CD8-positive, alpha-beta T cell (primary cell): ENCODE measurements at regions of chr1 and their contacts with region 1.

Region 1: DNA sequence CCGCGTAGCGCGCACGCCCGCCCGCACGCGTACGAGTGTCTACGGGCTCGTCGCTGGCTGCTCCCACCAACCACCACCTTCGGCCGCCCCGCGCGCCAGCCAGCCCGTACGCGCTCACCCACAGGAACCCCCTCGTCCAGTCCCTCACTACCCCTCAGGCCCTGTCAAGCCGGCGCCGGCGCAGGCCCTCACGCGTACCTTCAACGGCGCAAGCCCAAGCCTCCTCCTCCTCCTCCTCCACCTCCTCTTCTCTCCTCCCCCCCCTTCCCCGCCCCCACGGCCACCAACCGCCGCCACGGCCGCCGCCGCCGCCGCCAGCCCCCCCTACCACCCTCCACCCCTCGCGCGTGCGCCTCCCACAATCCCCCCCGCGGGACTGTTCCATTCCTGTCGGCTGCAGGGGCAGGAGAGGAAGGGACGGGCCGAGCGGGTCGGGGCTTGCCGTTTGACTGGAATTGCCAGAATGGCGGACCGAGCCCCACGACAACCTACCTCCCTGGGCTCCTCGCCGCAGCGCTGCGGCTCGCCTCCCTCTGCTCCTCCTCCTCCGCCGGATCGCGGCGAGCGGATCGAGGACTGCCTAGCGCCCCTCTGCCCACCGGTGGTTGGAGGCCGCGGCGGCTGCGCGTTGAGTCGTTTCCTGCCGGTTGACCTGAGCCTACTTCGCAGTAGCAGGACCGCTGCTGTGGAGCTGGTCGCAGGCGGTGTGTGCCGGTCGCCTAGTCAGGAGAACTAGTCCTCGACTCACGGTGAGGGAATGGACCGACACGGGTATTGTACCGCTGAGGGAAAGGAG is at the start of gene ASH1L:
- DNase-seq: peak; percentile 89 to 98 (median 94)
- ATAC-seq: peak; percentile 73
- H3K4me3 ChIP-seq: peak within 1 kb of the TSS; percentile 91 to 100
- H3K4me3 Mint-ChIP-seq: peak within 1 kb of the TSS; percentile 99
- H3K27ac ChIP-seq: peak within 1 kb of the TSS; percentile 97 to 98
- H3K27ac Mint-ChIP-seq: peak within 1 kb of the TSS; percentile 98
- H3K4me1 ChIP-seq: peaks cover 38% of the 10 kb centered on the region
- H3K4me1 Mint-ChIP-seq: peaks cover 53% of the 10 kb centered on the region
- H3K27me3 ChIP-seq: no peaks in the 10 kb centered on the region
- H3K27me3 Mint-ChIP-seq: no peaks in the 10 kb centered on the region
- CTCF ChIP-seq: no peak
- total RNA-seq, gene ASH1L: 54.6 to 58.9 TPM

Region 2: DNA sequence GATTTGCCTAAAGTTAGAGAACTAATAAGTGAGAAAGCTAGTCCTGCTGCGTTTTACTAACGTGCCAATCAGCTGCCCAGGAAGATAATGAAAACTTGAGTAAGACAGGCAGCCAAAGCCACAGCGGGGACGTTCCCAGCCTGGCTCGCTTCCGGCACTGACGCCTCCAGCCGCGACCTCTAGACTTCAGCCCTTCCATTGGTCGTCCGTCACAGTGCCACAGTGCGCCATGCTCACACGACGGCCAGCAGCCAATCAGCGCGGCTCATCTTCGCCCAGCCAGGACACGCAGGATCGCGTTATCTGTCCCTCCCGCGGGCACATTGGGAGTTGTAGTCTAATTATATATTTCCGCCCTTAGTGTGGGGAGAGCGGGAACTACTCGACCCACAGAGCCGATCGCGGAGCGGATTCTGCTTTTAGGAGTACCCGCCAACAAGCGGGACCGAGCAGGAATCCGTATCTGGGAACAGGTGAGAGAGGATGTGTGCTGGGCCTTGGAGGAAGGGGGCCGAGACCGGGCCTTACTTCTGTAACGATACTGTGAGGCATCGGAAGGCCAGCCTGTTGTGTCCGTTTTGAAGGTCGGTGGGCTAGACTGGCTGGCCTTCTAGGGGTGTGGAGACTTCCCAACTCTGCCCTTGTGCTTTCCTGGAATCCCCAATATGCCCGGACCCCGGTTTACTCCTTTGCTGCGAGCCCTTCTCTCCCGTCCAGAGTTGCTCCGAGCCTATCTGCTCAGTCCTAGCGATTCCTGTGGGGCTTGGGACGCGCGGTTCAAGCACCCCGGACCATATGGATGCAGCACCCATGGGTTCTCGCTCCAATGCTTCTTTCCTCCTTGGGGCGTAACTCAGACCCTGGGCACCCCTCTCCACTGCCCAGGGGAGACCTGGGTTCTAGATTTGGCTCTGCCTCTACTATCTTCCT is 254.0 kb before region 1 on chr1 and contains the start of gene FDPS:
- CTCF ChIA-PET with region 1: no interaction called
- POLR2A ChIA-PET with region 1: no interaction called
- intact Hi-C with region 1: loop called in 1 of 2 experiments (anchors 2 kb)
- DNase-seq: peak; percentile 92 to 100 (median 96)
- ATAC-seq: peak; percentile 97
- H3K4me3 ChIP-seq: peak within 1 kb of the TSS; percentile 73 to 97
- H3K4me3 Mint-ChIP-seq: peak within 1 kb of the TSS; percentile 94
- H3K27ac ChIP-seq: peak within 1 kb of the TSS; percentile 70 to 91
- H3K27ac Mint-ChIP-seq: peak within 1 kb of the TSS; percentile 93
- H3K4me1 ChIP-seq: peaks cover 18% of the 10 kb centered on the region
- H3K4me1 Mint-ChIP-seq: peaks cover 27% of the 10 kb centered on the region
- H3K27me3 ChIP-seq: no peaks in the 10 kb centered on the region
- H3K27me3 Mint-ChIP-seq: no peaks in the 10 kb centered on the region
- CTCF ChIP-seq: no peak
- total RNA-seq, gene FDPS: 38.2 to 38.7 TPM

Region 3: DNA sequence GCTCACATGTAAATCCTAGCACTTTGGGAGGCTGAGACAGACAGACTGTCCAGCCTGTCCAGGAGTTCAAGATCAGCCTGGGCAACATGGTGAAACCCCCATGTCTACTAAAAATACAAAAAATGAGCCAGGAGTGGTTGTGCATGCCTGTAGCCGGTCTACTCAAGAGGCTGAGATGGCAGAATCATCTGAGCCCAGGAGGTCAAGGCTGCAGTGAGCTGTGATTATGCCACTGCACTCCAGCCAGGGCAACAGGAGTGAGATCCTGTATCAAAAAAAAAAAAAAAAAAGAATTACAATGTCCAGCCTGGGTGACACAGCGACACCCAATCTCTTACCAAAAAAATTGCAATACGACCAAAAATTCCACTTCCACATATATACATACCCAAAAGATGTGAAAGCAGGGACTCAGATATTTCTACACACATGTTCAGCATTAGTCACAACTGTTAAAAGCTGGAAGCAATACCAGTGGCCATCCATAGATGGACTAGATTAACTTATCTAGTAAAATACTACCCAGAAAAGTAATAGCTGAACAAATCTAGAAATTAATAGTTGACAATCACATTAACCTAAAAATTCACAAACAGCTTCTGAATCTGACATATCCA is 49.4 kb before region 1 on chr1:
- CTCF ChIA-PET with region 1: no interaction called
- POLR2A ChIA-PET with region 1: interaction called, 4 read pairs
- intact Hi-C with region 1: loop called in 1 of 2 experiments (anchors 10 kb)
- DNase-seq: no peak
- ATAC-seq: no peak
- H3K4me3 ChIP-seq: no peak overlapping the region
- H3K4me3 Mint-ChIP-seq: no peak overlapping the region
- H3K27ac ChIP-seq: no peak overlapping the region
- H3K27ac Mint-ChIP-seq: peak overlapping the region; percentile 34
- H3K4me1 ChIP-seq: peaks cover 21% of the 10 kb centered on the region
- H3K4me1 Mint-ChIP-seq: peaks cover 54% of the 10 kb centered on the region
- H3K27me3 ChIP-seq: no peaks in the 10 kb centered on the region
- H3K27me3 Mint-ChIP-seq: no peaks in the 10 kb centered on the region
- CTCF ChIP-seq: no peak

Region 4: GRCh38 chr1:155609515-155610256 is 46.9 kb after region 1 on chr1 and contains the start of gene MSTO1:
- CTCF ChIA-PET with region 1: no interaction called
- POLR2A ChIA-PET with region 1: no interaction called
- intact Hi-C with region 1: loop called (anchors 2 kb)
- DNase-seq: peak; percentile 80 to 96 (median 92)
- ATAC-seq: peak; percentile 95
- H3K4me3 ChIP-seq: peak within 1 kb of the TSS; percentile 87 to 90
- H3K4me3 Mint-ChIP-seq: peak within 1 kb of the TSS; percentile 89
- H3K27ac ChIP-seq: peak within 1 kb of the TSS; percentile 46 to 81
- H3K27ac Mint-ChIP-seq: peak within 1 kb of the TSS; percentile 88
- H3K4me1 ChIP-seq: no peaks in the 10 kb centered on the region
- H3K4me1 Mint-ChIP-seq: peaks cover 6% of the 10 kb centered on the region
- H3K27me3 ChIP-seq: no peaks in the 10 kb centered on the region
- H3K27me3 Mint-ChIP-seq: no peaks in the 10 kb centered on the region
- CTCF ChIP-seq: no peak
- total RNA-seq, gene MSTO1: 66.4 to 70.2 TPM

Region 5: DNA sequence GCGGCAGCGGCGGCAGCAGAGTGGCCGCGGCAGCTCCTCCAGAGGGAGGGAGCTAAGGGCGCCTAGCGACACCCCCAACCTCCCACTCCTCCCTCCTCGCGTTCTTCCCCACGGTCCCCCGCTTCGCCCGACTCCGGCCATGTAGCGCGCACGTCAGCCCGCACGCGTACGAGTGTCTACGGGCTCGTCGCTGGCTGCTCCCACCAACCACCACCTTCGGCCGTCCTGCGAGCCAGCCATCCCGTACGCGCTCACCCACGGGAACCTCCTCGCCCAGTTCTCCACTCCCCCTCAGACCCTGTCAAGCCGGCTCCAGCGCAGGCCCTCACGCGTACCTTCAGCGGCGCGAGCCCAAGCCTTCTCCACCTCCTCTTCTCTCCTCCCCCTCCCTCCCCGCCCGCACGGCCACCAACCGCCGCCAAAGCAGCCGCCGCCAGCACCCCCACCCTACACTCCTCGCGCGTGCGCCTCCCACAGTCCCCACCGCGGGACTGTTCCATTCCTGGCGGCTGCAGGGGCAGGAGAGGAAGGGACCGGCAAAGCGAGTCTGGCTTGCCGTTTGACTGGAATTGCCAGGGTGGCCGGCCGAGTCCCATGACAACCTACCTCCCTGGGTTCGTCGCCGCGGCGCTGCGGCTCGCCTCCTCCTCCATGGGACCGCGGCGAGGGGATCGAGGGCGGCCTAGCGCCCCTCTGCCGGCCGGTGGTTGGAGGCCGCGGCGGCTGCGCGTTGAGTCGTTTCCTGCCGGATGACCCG is 125.7 kb after region 1 on chr1 and contains the start of gene YY1AP1:
- CTCF ChIA-PET with region 1: no interaction called
- POLR2A ChIA-PET with region 1: no interaction called
- intact Hi-C with region 1: loop called (anchors 1 to 2 kb)
- DNase-seq: peak; percentile 82 to 95 (median 91)
- ATAC-seq: peak; percentile 86
- H3K4me3 ChIP-seq: peak within 1 kb of the TSS; percentile 91 to 97
- H3K4me3 Mint-ChIP-seq: peak within 1 kb of the TSS; percentile 96
- H3K27ac ChIP-seq: peak within 1 kb of the TSS; percentile 92 to 96
- H3K27ac Mint-ChIP-seq: peak within 1 kb of the TSS; percentile 97
- H3K4me1 ChIP-seq: peaks cover 46% of the 10 kb centered on the region
- H3K4me1 Mint-ChIP-seq: peaks cover 68% of the 10 kb centered on the region
- H3K27me3 ChIP-seq: no peaks in the 10 kb centered on the region
- H3K27me3 Mint-ChIP-seq: no peaks in the 10 kb centered on the region
- CTCF ChIP-seq: no peak
- total RNA-seq, gene YY1AP1: 122 to 138 TPM

Region 6: GRCh38 chr1:155816351-155816750 is 253.6 kb after region 1 on chr1:
- CTCF ChIA-PET with region 1: no interaction called
- POLR2A ChIA-PET with region 1: no interaction called
- intact Hi-C with region 1: no loop called
- DNase-seq: no peak
- ATAC-seq: no peak
- H3K4me3 ChIP-seq: no peak overlapping the region
- H3K4me3 Mint-ChIP-seq: no peak overlapping the region
- H3K27ac ChIP-seq: no peak overlapping the region
- H3K27ac Mint-ChIP-seq: no peak overlapping the region
- H3K4me1 ChIP-seq: no peaks in the 10 kb centered on the region
- H3K4me1 Mint-ChIP-seq: no peaks in the 10 kb centered on the region
- H3K27me3 ChIP-seq: no peaks in the 10 kb centered on the region
- H3K27me3 Mint-ChIP-seq: no peaks in the 10 kb centered on the region
- CTCF ChIP-seq: no peak

Region 7: DNA sequence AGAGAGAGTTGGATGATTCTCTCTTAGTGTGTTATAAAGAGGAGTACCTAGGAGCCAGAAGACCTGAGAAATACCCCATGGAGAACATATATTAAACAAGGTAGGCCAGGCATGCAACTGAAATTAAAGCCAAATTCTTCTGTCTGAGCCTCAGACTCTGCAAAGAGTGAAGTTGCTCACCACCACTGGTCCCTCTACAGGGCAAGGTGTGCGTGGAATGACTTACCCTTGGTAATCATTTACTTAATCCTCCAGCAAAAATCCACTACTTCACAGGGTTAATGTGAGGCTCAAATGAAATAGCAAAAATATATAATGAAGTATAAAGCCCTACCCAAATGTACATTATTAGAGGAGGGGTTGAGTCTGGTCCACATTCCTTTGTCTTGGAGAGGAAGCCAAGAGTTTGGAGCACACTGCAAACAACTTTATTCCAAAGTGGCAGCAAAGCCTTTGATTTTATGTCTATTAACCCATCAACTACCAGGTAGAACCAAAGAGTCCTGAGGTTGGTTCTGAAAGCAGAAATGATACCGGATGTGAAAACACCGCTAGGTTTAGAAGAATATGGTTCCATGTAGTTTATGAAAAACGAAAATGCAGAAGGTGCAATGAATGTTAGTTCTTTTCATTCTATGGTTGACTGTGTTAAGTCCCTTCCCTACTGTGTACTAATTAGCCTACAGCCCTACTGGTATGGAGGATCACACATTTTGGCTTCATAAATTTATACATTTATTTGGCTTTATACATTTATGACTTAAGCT is 449.5 kb after region 1 on chr1:
- CTCF ChIA-PET with region 1: no interaction called
- POLR2A ChIA-PET with region 1: no interaction called
- intact Hi-C with region 1: no loop called
- DNase-seq: no peak
- ATAC-seq: no peak
- H3K4me3 ChIP-seq: no peak overlapping the region
- H3K4me3 Mint-ChIP-seq: no peak overlapping the region
- H3K27ac ChIP-seq: no peak overlapping the region
- H3K27ac Mint-ChIP-seq: no peak overlapping the region
- H3K4me1 ChIP-seq: no peaks in the 10 kb centered on the region
- H3K4me1 Mint-ChIP-seq: peaks cover 13% of the 10 kb centered on the region
- H3K27me3 ChIP-seq: no peaks in the 10 kb centered on the region
- H3K27me3 Mint-ChIP-seq: no peaks in the 10 kb centered on the region
- CTCF ChIP-seq: no peak